PC-9 (cell line): ENCODE measurements at regions of chr6 and their contacts with region 1.

Region 1: DNA sequence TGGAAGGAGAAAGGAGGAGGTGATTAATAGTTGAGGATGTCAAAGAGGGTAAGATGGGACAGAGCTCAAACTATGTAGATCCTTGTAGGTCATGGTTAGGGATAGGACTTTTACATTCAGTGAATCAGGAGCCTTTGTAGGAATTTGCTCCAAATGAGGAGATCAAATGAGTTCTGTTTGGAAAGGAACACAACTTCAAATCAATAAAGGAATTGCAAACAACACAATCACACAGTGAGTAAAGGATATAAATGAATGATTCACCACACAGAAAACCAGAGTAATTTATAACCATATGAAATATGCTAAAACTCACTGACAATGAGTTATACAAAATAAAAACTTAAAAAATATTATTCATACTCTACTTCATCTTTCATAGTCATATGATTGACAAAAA is 480.8 kb upstream of the EPHA7 start:
- DNase-seq: no peak
- H3K4me3 ChIP-seq: no peak overlapping the region
- H3K27ac ChIP-seq: no peak overlapping the region
- H3K4me1 ChIP-seq: no peaks in the 10 kb centered on the region
- H3K27me3 ChIP-seq: no peaks in the 10 kb centered on the region
- CTCF ChIP-seq: no peak

Region 2: GRCh38 chr6:93932175-93932574 is 32.0 kb after region 1 on chr6:
- CTCF ChIA-PET with region 1: no interaction called
- POLR2A ChIA-PET with region 1: no interaction called
- intact Hi-C with region 1: loop called (anchors 1 kb)
- DNase-seq: no peak
- H3K4me3 ChIP-seq: no peak overlapping the region
- H3K27ac ChIP-seq: no peak overlapping the region
- H3K4me1 ChIP-seq: no peaks in the 10 kb centered on the region
- H3K27me3 ChIP-seq: no peaks in the 10 kb centered on the region
- CTCF ChIP-seq: no peak